ENCODE measurements at regions of chr11 and their contacts with region 1.

Region 1: GRCh38 chr11:119101759-119102423 is at the start of gene DPAGT1:
- DNase-seq: peak; percentile 99
- H3K4me3 ChIP-seq: peak within 1 kb of the TSS; percentile 87
- H3K27ac ChIP-seq: peak within 1 kb of the TSS; percentile 92
- H3K4me1 ChIP-seq: peaks cover 20% of the 10 kb centered on the region
- H3K27me3 ChIP-seq: no peaks in the 10 kb centered on the region
- CTCF ChIP-seq: no peak
- total RNA-seq, gene DPAGT1: 102 and 115 TPM in 2 replicates

Region 2: GRCh38 chr11:118935376-118935775 is 166.5 kb before region 1 on chr11:
- CTCF ChIA-PET with region 1: no interaction called
- POLR2A ChIA-PET with region 1: no interaction called
- intact Hi-C with region 1: no loop called
- DNase-seq: no peak
- H3K4me3 ChIP-seq: no peak overlapping the region
- H3K27ac ChIP-seq: no peak overlapping the region
- H3K4me1 ChIP-seq: peaks cover 8% of the 10 kb centered on the region
- H3K27me3 ChIP-seq: no peaks in the 10 kb centered on the region
- CTCF ChIP-seq: no peak

Region 3: DNA sequence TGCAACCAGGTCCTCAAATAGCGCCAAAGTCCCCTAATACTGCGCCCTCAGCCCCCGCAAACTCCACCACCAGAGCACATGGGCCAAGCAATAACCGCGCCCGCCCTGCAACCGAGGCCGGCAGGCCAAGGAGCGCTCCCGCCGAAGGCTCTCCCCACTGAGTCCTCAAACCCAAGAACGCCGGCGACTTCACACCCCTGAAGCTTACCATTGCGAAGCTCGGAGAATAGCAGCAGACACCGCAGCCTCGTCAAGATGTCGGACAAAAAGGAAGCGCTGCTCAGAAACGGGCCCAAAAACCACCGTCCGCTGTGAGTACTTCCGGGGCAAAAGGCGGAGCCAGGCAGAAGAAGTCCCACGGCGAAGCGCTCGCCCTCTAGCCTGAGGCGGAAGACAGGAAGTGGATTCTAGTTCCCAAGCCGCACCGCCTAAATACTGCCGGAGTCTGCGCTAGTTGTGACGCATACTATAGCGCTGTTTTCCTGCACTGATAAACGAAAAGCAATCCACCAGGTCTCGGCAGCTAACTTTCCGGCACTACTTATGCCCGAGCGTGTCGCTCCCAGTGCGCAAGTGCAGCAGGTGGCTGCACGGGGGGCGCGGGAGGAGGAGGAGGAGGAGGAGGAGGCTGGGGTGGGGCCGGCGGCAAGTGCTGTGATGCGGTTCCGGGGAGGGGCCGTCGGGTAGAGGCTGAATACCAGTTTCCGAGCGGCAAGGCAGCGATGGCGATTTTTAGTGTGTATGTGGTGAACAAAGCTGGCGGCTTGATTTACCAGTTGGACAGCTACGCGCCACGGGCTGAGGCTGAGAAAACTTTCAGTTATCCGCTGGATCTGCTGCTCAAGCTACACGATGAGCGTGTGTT is 83.6 kb before region 1 on chr11 and contains the starts of genes RPS25 and TRAPPC4:
- CTCF ChIA-PET with region 1: no interaction called
- POLR2A ChIA-PET with region 1: no interaction called
- intact Hi-C with region 1: loop called (anchors 5 kb)
- DNase-seq: peak; percentile 99
- H3K4me3 ChIP-seq: peak within 1 kb of the TSS; percentile 77
- H3K27ac ChIP-seq: peak within 1 kb of the TSS; percentile 95
- H3K4me1 ChIP-seq: peaks cover 18% of the 10 kb centered on the region
- H3K27me3 ChIP-seq: no peaks in the 10 kb centered on the region
- CTCF ChIP-seq: no peak
- total RNA-seq, gene RPS25: 1,091 and 1,176 TPM in 2 replicates
- total RNA-seq, gene TRAPPC4: 73.0 and 81.2 TPM in 2 replicates

Region 4: GRCh38 chr11:119084663-119085436 is 17.0 kb before region 1 on chr11 and contains the start of gene HMBS:
- CTCF ChIA-PET with region 1: interaction called, 12 read pairs
- POLR2A ChIA-PET with region 1: interaction called, 3 read pairs
- intact Hi-C with region 1: no loop called
- DNase-seq: peak; percentile 99
- H3K4me3 ChIP-seq: peak within 1 kb of the TSS; percentile 80
- H3K27ac ChIP-seq: peak within 1 kb of the TSS; percentile 97
- H3K4me1 ChIP-seq: peaks cover 11% of the 10 kb centered on the region
- H3K27me3 ChIP-seq: no peaks in the 10 kb centered on the region
- CTCF ChIP-seq: no peak
- total RNA-seq, gene HMBS: 72.5 and 80.6 TPM in 2 replicates

Region 5: DNA sequence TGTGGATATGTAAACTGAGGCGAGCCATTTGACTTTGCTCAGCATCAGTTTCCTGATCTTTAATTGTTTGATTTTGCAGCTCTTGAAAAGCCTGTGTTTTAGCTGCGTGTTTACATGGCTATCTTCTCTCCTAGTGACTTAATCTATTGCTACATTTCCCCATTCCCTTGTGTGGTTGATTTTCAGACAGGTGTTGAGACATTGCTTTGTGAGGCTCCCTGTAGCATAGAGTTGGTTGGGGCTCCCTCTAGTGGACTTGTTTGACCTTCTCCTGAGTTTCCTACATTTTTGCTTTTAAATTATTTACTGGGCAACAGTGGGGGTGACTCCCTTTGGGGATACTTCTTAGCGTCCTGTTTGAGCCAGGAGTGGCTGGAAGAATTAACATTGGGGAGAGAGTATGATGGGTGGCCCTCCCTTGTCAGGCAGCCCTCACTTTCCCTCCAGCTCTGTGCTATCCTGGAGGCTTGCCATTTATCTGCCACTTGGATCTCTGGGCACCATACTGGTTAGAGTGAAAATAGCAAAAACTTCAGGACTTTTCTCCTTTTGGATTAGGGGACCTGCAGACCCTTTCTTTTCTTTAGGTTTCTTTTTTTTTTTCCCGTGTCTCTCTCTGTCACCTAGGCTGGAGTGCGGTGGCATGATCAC is 95.1 kb after region 1 on chr11:
- CTCF ChIA-PET with region 1: interaction called, 8 read pairs
- POLR2A ChIA-PET with region 1: interaction called, 3 read pairs
- intact Hi-C with region 1: loop called (anchors 2 kb)
- DNase-seq: peak; percentile 89
- H3K4me3 ChIP-seq: no peak overlapping the region
- H3K27ac ChIP-seq: no peak overlapping the region
- H3K4me1 ChIP-seq: no peaks in the 10 kb centered on the region
- H3K27me3 ChIP-seq: no peaks in the 10 kb centered on the region
- CTCF ChIP-seq: peak; percentile 95